ENCODE measurements at regions of chr11 and their contacts with region 1.

Region 1: DNA sequence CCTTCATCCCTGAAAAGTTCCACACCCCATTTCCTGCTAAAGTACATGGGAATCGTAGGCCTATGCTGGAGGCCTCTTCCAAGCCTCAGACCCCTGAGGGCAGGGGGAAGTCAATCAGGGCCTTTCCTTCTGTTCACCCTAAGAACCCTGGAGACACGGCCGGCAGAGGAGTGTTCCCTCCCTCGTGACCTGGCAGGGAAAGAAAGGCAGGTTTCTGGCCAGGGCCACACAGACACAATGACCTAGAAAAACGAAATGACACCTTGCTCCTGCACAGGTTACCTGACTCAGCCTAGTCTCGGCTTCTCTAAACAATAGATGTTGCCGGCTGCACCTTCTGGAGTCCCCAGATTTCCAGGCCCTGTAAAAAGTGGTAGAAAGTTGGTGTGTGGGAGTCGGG is 60.6 kb upstream of the CADM1 start:
- DNase-seq: no peak

Region 2: GRCh38 chr11:115581871-115582639 is 17.2 kb after region 1 on chr11:
- intact Hi-C with region 1: loop called in 1 of 2 experiments (anchors 1 kb)
- DNase-seq: no peak

Region 3: GRCh38 chr11:115606498-115607220 is 41.8 kb after region 1 on chr11:
- intact Hi-C with region 1: no loop called
- DNase-seq: no peak